CD4-positive, alpha-beta T cell (primary cell): ENCODE measurements at regions of chr3 and their contacts with region 1.

Region 1: DNA sequence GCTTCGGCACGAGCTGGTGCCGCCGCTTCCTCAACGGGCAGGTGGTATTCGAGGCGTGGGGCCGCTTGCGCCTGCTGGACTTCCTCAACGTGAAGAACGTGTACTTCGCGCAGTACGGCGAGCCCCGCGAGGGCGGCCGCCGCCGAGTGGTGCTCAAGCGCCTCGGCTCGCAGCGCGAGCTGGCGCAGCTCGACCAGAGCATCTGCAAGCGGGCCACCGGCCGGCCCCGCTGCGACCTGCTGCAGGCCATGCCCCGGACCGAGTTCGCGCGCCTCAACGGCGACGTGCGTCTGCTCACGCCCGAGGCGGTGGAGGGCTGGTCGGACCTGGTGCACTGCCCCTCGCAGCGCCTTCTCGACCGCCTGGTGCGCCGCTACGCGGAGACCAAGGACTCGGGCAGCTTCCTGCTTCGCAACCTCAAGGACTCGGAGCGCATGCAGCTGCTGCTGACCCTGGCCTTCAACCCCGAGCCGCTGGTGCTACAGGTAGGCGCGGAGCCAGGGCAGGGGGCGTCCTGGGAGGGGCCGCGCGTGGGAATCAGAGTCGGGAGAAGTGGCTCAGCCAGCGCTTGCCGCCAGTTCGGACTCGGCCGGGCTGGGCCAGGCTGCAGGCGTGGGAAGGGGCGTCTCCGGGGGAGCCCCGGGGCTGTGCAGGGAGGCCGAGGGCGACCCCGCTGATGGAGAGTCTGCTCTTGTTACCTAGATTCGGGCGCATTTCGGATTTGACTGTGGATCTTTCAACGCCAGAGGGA is 1.1 kb downstream of the DIPK2A start:
- DNase-seq: peak in 13 of 14 experiments; percentile 22 to 90 (median 53)
- ATAC-seq: no peak
- H3K4me3 ChIP-seq: peak overlapping the region; percentile 90
- H3K4me3 Mint-ChIP-seq: peak overlapping the region; percentile 97
- H3K27ac ChIP-seq: peak overlapping the region; percentile 76 to 79
- H3K27ac Mint-ChIP-seq: peak overlapping the region; percentile 91
- H3K4me1 ChIP-seq: peaks cover 11% of the 10 kb centered on the region
- H3K4me1 Mint-ChIP-seq: peaks cover 52% of the 10 kb centered on the region
- H3K27me3 ChIP-seq: peaks cover 0 to 3% of the 10 kb centered on the region in 2 experiments
- H3K27me3 Mint-ChIP-seq: no peaks in the 10 kb centered on the region
- CTCF ChIP-seq: peak; percentile 63

Region 2: DNA sequence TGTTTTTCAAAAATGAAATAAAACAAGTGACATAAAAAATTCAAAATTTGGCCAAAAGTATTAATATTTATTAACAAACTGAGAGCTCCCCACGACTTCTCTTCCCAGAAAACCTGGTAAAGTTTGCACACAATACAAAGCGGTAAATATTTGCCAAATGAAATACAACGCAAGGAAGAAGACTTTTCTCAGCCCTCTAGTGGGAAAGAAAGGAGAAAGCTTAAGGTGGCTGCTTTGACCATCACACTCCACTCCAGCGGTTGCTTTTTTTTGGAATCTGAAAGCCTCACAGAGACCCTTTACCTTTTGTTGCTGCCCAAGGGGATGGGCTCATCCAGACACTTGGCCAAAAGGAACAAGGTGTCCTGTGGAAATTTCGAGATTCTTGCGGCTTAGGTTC is 1746.2 kb before region 1 on chr3:
- CTCF ChIA-PET with region 1: no interaction called
- POLR2A ChIA-PET with region 1: no interaction called
- intact Hi-C with region 1: loop called in 1 of 2 experiments (anchors 5 kb)
- DNase-seq: peak in 1 of 14 experiments; percentile 10
- ATAC-seq: no peak
- H3K4me3 ChIP-seq: no peak overlapping the region
- H3K4me3 Mint-ChIP-seq: peak overlapping the region; percentile 95
- H3K27ac ChIP-seq: no peak overlapping the region
- H3K27ac Mint-ChIP-seq: no peak overlapping the region
- H3K4me1 ChIP-seq: peaks cover 10% of the 10 kb centered on the region
- H3K4me1 Mint-ChIP-seq: peaks cover 22% of the 10 kb centered on the region
- H3K27me3 ChIP-seq: no peaks in the 10 kb centered on the region
- H3K27me3 Mint-ChIP-seq: no peaks in the 10 kb centered on the region
- CTCF ChIP-seq: no peak

Region 3: DNA sequence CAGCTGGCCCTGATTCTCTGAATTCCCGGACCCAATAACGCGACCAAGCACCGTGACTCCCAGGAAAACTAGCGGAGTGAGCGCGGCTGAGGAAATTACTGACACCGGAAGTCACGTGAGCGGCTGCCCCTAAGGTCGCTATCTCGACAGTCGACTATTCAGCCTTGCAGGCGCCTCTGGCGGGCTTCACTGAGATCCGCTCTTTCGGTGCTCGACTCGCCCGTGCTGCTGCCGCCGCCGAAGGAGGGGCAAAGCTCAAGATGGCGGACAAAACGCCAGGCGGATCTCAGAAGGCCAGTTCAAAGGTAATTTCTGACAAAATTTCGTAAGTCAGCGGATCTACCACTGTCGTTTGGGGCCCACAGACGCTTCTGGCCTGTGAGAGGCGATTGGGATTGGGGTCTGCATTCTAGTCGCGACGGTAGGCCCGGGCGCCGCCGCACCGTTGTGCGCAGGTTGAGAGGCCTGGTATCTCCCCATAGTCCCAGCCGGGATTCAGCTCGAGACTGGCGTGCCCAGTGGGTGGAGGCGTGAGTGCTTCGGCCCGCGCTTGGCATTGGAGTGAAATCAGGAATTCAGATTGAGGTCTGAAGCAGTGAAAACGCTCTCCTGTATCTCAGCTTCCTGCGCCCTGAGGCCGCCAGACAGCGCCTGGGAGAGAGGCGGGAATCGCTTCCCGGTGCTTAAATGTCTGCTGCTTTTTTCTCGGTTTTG is 971.2 kb before region 1 on chr3 and contains the start of gene U2SURP:
- CTCF ChIA-PET with region 1: interaction called, 3 read pairs
- POLR2A ChIA-PET with region 1: interaction called, 46 read pairs
- intact Hi-C with region 1: loop called (anchors 5 kb)
- DNase-seq: peak; percentile 83 to 96 (median 86)
- ATAC-seq: peak; percentile 93
- H3K4me3 ChIP-seq: peak within 1 kb of the TSS; percentile 89
- H3K4me3 Mint-ChIP-seq: peak within 1 kb of the TSS; percentile 97
- H3K27ac ChIP-seq: peak within 1 kb of the TSS; percentile 93 to 94
- H3K27ac Mint-ChIP-seq: peak within 1 kb of the TSS; percentile 97
- H3K4me1 ChIP-seq: peaks cover 23% of the 10 kb centered on the region
- H3K4me1 Mint-ChIP-seq: peaks cover 55% of the 10 kb centered on the region
- H3K27me3 ChIP-seq: peaks cover 0 to 4% of the 10 kb centered on the region in 2 experiments
- H3K27me3 Mint-ChIP-seq: peaks cover 14% of the 10 kb centered on the region
- CTCF ChIP-seq: no peak
- total RNA-seq, gene U2SURP: 164 to 179 TPM

Region 4: DNA sequence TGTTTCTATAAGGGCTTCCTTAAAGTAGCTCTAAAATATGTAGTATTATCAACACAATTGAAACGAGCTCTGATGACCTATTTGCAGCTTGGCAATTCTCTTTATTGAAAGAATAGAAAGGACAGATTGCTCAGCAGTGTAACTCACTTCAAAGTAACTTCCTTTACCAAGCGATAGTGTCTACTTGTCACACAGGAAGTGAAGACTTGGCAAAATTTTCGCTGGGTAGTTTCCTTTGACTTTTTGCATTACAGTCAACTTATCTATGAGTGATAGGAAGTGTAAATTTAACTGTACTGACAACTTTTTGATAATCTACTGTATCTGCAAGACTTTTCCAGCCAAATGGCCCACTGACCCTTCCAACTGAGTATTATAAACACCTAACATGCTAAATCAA is 147.2 kb before region 1 on chr3:
- CTCF ChIA-PET with region 1: no interaction called
- POLR2A ChIA-PET with region 1: interaction called, 12 read pairs
- intact Hi-C with region 1: no loop called
- DNase-seq: peak in 5 of 14 experiments; percentile 7 to 83 (median 68)
- ATAC-seq: peak; percentile 90
- H3K4me3 ChIP-seq: no peak overlapping the region
- H3K4me3 Mint-ChIP-seq: no peak overlapping the region
- H3K27ac ChIP-seq: no peak overlapping the region
- H3K27ac Mint-ChIP-seq: peak overlapping the region; percentile 50
- H3K4me1 ChIP-seq: peaks cover 24% of the 10 kb centered on the region
- H3K4me1 Mint-ChIP-seq: peaks cover 54% of the 10 kb centered on the region
- H3K27me3 ChIP-seq: no peaks in the 10 kb centered on the region
- H3K27me3 Mint-ChIP-seq: no peaks in the 10 kb centered on the region
- CTCF ChIP-seq: no peak

Region 5: GRCh38 chr3:143956838-143957237 is 15.8 kb before region 1 on chr3:
- CTCF ChIA-PET with region 1: interaction called, 5 read pairs
- POLR2A ChIA-PET with region 1: interaction called, 17 read pairs
- intact Hi-C with region 1: no loop called
- DNase-seq: peak in 1 of 14 experiments; percentile 15
- ATAC-seq: no peak
- H3K4me3 ChIP-seq: no peak overlapping the region
- H3K4me3 Mint-ChIP-seq: no peak overlapping the region
- H3K27ac ChIP-seq: no peak overlapping the region
- H3K27ac Mint-ChIP-seq: no peak overlapping the region
- H3K4me1 ChIP-seq: no peaks in the 10 kb centered on the region
- H3K4me1 Mint-ChIP-seq: no peaks in the 10 kb centered on the region
- H3K27me3 ChIP-seq: no peaks in the 10 kb centered on the region
- H3K27me3 Mint-ChIP-seq: peaks cover 14% of the 10 kb centered on the region
- CTCF ChIP-seq: no peak